Dorsolateral prefrontal cortex (tissue), 120 donors: ENCODE measurements at regions of chr3 and their contacts with region 1.

Region 1: GRCh38 chr3:132029182-132029902 is 5.5 kb downstream of the CPNE4 start:
- DNase-seq: peak; percentile 52 to 92 (median 84)
- H3K4me3 ChIP-seq: no peak overlapping the region
- H3K27ac ChIP-seq: no peak overlapping the region
- H3K27me3 ChIP-seq: peaks cover 0 to 29% (median 0%) of the 10 kb centered on the region in 45 donors
- CTCF ChIP-seq: peak; percentile 30 to 92 (median 80)

Region 2: GRCh38 chr3:131053043-131053859 is 976.1 kb before region 1 on chr3:
- intact Hi-C with region 1: loop called (anchors 5 to 10 kb)
- DNase-seq: no peak
- H3K4me3 ChIP-seq: no peak overlapping the region
- H3K27ac ChIP-seq: no peak overlapping the region
- H3K27me3 ChIP-seq: no peaks in the 10 kb centered on the region
- CTCF ChIP-seq: peak in 55 of 56 donors; percentile 17 to 82 (median 56)

Region 3: GRCh38 chr3:131794766-131795388 is 234.5 kb before region 1 on chr3:
- intact Hi-C with region 1: loop called (anchors 1 to 2 kb)
- DNase-seq: peak in 2 of 10 donors; percentile 9 to 17
- H3K4me3 ChIP-seq: no peak overlapping the region
- H3K27ac ChIP-seq: no peak overlapping the region
- H3K27me3 ChIP-seq: no peaks in the 10 kb centered on the region
- CTCF ChIP-seq: peak; percentile 53 to 93 (median 85)